HepG2 (cell line): ENCODE measurements at regions of chrX and their contacts with region 1.

Region 1: GRCh38 chrX:23803931-23804381 is 21.0 kb downstream of the SAT1 start:
- DNase-seq: peak; percentile 70
- ATAC-seq: peak; percentile 30; the same call in 2 of the 3 replicates
- H3K4me3 ChIP-seq: no peak overlapping the region
- H3K27ac ChIP-seq: peak overlapping the region; percentile 65
- H3K4me1 ChIP-seq: peaks cover 46% of the 10 kb centered on the region
- H3K27me3 ChIP-seq: no peaks in the 10 kb centered on the region
- CTCF ChIP-seq: no peak
- EP300 ChIP-seq: 0 out of 4 replicates have a peak, but pooled peaks of 1 of the 2 experiments have one; percentile 9
- POLR2A ChIP-seq: no peak
- RAD21 ChIP-seq: no peak

Region 2: DNA sequence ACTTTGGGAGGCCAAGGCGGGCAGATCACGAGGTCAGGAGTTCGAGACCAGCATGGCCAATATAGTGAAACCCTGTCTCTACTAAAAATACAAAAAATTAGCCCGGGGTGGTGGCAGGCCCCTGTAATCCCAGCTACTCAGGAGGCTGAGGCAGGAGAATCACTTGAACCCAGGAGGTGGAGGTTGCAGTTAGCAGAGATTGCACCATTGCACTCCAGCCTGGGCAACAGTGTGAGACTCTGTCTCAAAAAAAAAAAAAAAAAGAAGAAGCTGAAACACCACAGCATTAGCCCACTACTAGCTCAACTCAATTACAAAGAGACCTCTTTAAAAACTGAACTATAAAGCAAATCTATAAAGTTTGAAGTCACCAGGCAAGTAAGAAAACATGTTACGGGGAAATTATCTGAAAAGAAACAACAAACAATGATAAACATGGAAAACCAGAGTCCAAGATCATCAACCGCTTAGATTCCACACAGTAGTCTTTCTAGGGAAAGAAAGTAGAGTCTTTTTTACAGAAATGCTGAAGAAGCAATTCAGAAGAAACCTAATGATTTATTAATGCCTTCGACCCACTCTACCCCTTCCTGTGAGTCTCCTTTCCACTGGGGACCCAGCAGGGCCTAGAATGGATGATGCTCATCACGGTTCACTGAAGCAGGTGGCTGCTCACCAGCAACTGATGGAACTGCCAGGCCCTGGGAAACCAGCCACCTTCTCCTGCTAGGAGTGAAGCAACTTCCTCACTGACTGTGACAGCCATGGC is 14.4 kb before region 1 on chrX:
- CTCF ChIA-PET with region 1: no interaction called
- POLR2A ChIA-PET with region 1: interaction called, 42 read pairs
- in situ Hi-C with region 1: no loop called
- intact Hi-C with region 1: loop called (anchors 2 kb)
- DNase-seq: no peak
- ATAC-seq: peak; percentile 40
- H3K4me3 ChIP-seq: no peak overlapping the region
- H3K27ac ChIP-seq: peak overlapping the region; percentile 48
- H3K4me1 ChIP-seq: peaks cover 34% of the 10 kb centered on the region
- H3K27me3 ChIP-seq: no peaks in the 10 kb centered on the region
- CTCF ChIP-seq: no peak
- EP300 ChIP-seq: no peak
- POLR2A ChIP-seq: no peak
- RAD21 ChIP-seq: no peak

Region 3: DNA sequence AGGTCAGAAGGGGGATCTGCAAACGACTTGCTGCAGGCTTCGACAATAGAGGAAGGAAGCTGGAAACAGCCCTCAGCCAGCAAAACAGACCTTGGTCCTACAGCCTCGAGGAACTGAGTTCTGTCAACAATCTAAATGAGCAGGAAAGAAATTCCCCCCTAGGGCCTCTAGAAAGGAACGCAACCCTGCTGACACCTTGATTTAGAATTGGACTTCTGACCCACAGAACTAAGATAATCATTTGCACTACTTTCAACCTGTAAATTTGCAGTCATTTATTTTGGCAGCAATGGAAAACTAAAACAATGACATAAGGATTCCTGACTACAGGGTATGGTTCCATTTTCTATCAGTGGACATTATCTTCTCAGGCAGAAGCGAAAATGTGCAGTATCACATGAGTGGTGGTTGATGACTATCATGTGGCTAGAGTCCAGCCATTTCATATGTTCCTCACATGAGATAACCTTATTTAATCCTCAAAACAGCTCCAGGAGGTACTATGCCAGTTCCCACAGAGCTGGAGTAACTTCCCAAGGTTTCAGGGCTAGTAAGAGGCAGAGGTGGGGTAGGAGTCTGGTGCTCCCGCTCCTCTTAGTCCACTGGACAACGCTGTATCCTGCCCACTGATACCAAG is 40.7 kb after region 1 on chrX:
- CTCF ChIA-PET with region 1: no interaction called
- POLR2A ChIA-PET with region 1: interaction called, 7 read pairs
- in situ Hi-C with region 1: no loop called
- intact Hi-C with region 1: loop called (anchors 5 kb)
- DNase-seq: peak; percentile 65
- ATAC-seq: peak; percentile 63
- H3K4me3 ChIP-seq: peak overlapping the region in 2 of 3 experiments; percentile 20 to 55; a peak in 3 of 6 replicates
- H3K27ac ChIP-seq: peak overlapping the region; percentile 93
- H3K4me1 ChIP-seq: peaks cover 63% of the 10 kb centered on the region
- H3K27me3 ChIP-seq: no peaks in the 10 kb centered on the region
- CTCF ChIP-seq: no peak
- EP300 ChIP-seq: peak in 1 of 2 experiments; percentile 81; a peak in 2 of 4 replicates
- POLR2A ChIP-seq: no peak
- RAD21 ChIP-seq: no peak